ENCODE measurements at regions of chr12 and their contacts with region 1.

Region 1: GRCh38 chr12:40921563-40922163 is 229.4 kb downstream of the CNTN1 start:
- DNase-seq: peak; percentile 27
- H3K4me3 ChIP-seq: no peak overlapping the region
- H3K27ac ChIP-seq: no peak overlapping the region
- H3K4me1 ChIP-seq: no peaks in the 10 kb centered on the region
- H3K27me3 ChIP-seq: peaks cover 0 to 4% of the 10 kb centered on the region in 2 experiments
- CTCF ChIP-seq: peak in 1 of 2 donors; percentile 34
- POLR2A ChIP-seq: no peak

Region 2: DNA sequence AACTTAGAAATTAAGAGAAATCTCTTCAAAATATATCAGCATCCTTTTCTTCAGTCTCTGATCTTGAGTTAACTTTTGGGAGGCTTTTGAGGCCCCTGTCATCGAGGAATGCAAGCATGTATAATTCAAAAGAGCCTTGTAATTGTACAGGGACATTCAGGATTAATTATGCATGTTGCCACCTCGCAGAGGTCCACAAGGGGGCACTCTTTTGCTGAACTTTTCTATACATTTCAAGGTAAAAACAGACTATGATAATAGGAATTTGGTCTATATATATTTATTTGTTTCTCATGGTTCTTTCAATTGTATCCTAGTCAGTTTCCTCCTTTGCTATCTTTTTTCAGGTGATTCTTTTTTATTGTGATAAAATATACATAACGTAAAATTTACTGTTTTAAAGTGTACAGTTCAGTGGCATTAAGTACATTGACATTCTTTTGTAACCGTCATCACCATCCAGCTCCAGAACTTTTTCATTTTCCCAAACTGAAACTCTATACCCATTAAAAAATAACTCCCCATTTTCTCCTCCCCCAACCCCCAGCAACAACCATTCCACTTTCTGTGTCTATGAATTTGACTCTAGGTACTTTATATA is 768.8 kb before region 1 on chr12:
- CTCF ChIA-PET with region 1: no interaction called
- POLR2A ChIA-PET with region 1: no interaction called
- dilution Hi-C with region 1: no loop called
- intact Hi-C with region 1: loop called (anchors 10 kb)
- DNase-seq: peak; percentile 68
- H3K4me3 ChIP-seq: no peak overlapping the region
- H3K27ac ChIP-seq: no peak overlapping the region
- H3K4me1 ChIP-seq: peaks cover 4% of the 10 kb centered on the region
- H3K27me3 ChIP-seq: no peaks in the 10 kb centered on the region
- CTCF ChIP-seq: peak; percentile 55 to 68
- POLR2A ChIP-seq: no peak

Region 3: GRCh38 chr12:40336573-40337199 is 585.0 kb before region 1 on chr12:
- CTCF ChIA-PET with region 1: interaction called, 6 read pairs
- POLR2A ChIA-PET with region 1: no interaction called
- dilution Hi-C with region 1: no loop called
- intact Hi-C with region 1: loop called (anchors 1 kb)
- DNase-seq: peak; percentile 28
- H3K4me3 ChIP-seq: no peak overlapping the region
- H3K27ac ChIP-seq: no peak overlapping the region
- H3K4me1 ChIP-seq: no peaks in the 10 kb centered on the region
- H3K27me3 ChIP-seq: no peaks in the 10 kb centered on the region
- CTCF ChIP-seq: peak; percentile 21 to 44
- POLR2A ChIP-seq: no peak

Region 4: DNA sequence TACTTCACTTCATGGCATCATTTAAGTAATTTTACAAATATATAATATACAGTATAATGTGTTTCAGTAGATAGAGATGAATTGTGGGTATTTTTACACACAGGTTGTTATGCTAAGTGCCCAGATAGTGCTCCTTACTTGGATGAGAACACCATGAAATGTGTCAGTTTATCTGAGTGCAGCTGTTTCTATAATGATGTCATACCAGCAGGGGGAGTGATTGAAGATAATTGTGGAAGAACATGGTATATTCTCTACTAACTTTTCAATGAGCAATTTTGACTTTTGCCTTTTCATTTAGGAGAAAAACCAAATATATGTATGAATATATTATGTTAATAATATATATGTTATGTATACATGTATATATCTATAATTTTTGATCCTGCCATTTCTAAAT is 475.3 kb before region 1 on chr12:
- CTCF ChIA-PET with region 1: interaction called, 6 read pairs
- POLR2A ChIA-PET with region 1: no interaction called
- dilution Hi-C with region 1: no loop called
- intact Hi-C with region 1: loop called (anchors 5 kb)
- DNase-seq: peak; percentile 13
- H3K4me3 ChIP-seq: no peak overlapping the region
- H3K27ac ChIP-seq: no peak overlapping the region
- H3K4me1 ChIP-seq: no peaks in the 10 kb centered on the region
- H3K27me3 ChIP-seq: no peaks in the 10 kb centered on the region
- CTCF ChIP-seq: peak; percentile 5 to 27
- POLR2A ChIP-seq: no peak

Region 5: GRCh38 chr12:40622246-40622838 is 299.3 kb before region 1 on chr12:
- CTCF ChIA-PET with region 1: interaction called, 18 read pairs
- POLR2A ChIA-PET with region 1: no interaction called
- dilution Hi-C with region 1: no loop called
- intact Hi-C with region 1: loop called (anchors 1 kb)
- DNase-seq: peak; percentile 57
- H3K4me3 ChIP-seq: no peak overlapping the region
- H3K27ac ChIP-seq: no peak overlapping the region
- H3K4me1 ChIP-seq: no peaks in the 10 kb centered on the region
- H3K27me3 ChIP-seq: no peaks in the 10 kb centered on the region
- CTCF ChIP-seq: peak; percentile 56 to 63
- POLR2A ChIP-seq: no peak